Posterior cingulate gyrus (tissue), 11 donors: ENCODE measurements at regions of chr6 and their contacts with region 1.

Region 1: DNA sequence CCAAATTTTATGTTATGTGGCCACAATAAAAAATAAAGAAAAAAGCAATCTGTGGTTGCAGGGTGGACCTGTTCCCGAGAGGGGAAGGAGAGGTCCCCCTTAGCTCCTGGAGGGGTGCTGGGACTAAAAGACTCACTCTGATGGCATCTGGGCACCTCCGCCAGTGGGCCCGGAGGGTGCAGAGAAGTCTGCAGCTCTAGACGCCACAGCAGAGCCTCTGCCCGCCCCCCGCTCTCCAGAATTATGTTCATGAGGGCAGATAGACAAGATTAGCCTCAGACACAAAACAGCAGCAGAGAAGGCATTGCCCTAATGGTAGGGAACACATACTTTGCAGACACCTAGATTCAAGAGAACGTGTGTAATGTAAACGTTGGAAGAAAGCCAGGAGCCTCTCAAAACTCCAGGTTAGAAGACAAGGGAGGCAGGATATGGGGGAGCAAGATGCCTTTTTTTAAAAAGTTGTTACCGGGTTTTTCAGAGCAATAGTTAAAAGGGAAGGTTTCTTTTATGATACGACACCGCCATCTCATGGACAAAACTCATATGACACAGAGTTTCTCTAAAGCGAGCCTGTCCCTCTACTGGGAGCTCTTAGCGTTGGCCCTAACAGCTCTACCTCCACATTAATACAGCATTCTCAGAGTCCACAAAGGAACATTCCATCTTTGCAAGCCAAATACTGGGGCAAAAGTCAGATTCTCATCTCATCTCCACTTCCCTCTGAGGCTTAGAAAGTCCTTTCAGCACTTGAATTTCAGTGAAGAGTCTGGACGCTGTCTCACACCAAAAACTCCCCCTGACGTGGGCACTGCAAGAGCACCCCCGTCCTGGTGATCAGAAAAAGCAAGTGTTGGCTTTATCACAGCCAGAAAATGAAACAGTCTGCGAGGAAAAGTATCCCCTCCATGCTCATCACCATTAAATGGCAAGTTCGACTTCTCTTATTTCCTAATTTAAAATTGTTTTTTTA is 47.2 kb downstream of the FOXF2 start:
- DNase-seq: peak in 2 of 10 donors; percentile 25 to 36

Region 2: DNA sequence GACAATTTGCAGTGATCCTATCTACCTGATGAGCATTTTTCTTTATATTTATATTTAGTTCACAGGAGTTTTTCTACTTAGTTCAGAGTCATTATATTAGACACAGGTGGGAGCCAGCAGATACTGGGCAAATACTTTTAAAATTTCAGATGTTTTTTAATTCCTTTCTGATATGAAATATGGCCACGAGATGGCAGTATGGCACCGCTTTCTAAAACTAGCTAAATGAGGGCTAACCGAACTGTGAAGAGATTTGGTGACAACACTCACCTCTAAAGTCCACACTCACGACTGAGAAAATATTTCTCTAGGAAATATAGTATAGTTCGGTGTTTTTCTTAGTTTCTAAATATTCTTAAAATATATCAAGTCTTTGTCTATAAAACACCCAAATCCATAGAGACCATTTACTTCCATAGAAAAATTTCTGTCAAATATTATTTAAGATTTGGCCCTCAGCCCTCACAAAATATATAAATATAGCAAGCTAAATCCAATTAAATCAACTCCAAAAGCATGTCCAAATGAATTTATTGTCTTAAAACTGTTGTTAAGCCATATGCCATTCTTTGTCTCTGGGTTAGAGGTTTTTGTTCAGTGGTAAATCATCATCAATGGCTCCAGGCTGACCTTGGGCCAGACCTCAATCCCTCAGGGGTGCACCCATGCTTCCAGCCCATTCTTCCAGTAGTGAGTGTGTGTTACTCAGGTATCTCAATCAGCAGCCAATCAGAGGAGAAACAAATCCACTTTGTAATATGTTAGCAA is 843.3 kb before region 1 on chr6:
- intact Hi-C with region 1: loop called (anchors 5 kb)
- DNase-seq: peak in 4 of 10 donors; percentile 27 to 55 (median 40)

Region 3: GRCh38 chr6:722077-722524 is 714.5 kb before region 1 on chr6:
- intact Hi-C with region 1: loop called (anchors 5 kb)
- DNase-seq: peak; percentile 36 to 95 (median 78)

Region 4: GRCh38 chr6:733431-734219 is 703.0 kb before region 1 on chr6:
- intact Hi-C with region 1: no loop called
- DNase-seq: no peak

Region 5: GRCh38 chr6:1222728-1223595 is 213.7 kb before region 1 on chr6:
- intact Hi-C with region 1: no loop called
- DNase-seq: peak in 4 of 10 donors; percentile 26 to 82 (median 51)

Region 6: DNA sequence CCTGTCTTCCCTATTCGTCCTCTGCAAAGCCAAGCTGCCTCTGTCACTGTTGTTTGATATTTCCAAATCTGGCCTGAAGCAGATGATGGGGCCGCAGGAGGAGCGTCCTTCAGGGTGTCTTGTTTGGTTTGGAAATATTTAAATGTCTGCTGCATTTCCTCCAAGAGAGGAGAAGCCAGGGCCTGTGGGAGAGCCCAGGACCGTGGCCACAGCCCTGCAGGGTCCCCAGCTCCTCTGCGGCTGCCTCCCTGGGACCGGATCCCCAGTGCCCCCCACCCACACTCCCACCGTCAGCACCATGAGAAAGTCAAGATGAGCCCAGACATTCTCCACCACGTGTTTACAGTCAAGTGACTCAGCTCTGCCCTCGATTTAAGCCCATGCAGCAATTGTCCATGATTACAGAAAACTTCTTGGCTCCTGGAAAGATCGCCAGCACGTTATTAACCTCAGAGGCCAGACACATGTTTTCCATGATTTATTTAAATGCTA is 29.1 kb before region 1 on chr6:
- intact Hi-C with region 1: no loop called
- DNase-seq: peak in 1 of 10 donors; percentile 36

Region 7: DNA sequence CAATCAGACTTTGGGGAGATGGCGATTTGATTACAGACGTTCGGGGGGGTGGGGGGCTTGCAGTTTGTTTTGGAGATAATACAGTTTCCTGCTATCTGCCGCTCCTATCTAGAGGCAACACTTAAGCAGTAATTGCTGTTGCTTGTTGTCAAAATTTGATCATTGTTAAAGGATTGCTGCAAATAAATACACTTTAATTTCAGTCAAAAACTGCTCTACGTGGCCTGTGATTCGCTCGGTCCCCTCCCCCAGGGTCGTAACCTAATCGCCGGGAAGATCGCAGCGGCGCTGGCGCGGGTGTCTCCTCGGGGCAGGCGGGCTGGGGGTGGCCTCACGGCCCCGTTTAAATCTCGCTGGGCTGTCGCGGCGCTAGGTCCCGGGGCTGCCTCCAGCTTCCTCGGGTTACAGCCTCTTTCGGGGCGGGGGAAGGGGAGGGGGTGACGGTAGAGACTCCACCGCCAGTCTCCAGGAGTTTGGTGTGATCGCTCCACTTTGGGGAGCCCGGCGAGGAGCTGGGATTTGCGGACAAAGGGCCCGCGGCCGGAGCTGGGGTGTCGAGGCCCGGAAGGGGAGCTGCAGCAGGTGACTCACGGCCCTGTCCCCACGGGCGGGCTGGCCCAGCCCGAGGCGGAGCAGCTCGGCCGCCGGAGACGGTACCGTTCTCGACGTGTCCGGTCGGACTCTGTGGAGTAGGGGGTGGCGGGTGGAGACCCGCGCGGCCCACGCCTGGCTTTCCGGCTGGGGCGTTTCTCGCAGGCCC is 177.2 kb after region 1 on chr6:
- intact Hi-C with region 1: no loop called
- DNase-seq: peak in 2 of 10 donors; percentile 69 to 82